A549 (cell line): ENCODE measurements at regions of chr6 and their contacts with region 1.

Region 1: DNA sequence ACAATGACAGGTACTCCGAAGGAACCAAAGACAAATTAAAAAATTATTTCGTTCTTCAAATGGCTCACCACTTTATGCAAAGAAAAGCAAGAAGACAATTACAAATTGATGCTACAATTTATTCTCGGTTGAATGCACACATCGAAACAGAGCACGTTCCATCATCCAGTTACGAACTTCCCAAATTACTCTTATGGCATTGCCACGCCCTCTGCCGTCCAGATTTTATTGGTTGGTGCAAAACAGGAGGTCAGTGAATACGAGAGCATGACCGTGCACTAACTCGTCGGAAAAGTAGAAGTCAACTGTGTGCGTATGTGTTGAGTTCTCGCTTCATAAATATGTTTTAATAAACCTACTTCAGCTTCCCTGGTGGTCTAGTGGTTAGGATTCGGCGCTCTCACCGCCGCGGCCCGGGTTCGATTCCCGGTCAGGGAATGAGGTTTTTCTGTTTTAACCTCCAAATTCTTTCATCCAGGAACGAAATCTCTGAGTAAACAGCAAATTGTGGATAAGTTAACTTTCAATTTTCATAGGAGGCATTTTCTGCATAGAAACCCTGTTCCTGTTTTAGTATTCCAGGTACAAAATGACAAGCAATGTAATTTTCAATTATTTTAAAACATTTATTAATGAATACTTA is 23.2 kb downstream of the ZNF311 start:
- DNase-seq: peak; percentile 27 to 91
- ATAC-seq: peak; percentile 17 to 52; a peak in 3 of 6 replicates
- H3K4me3 ChIP-seq: peak overlapping the region; percentile 80
- H3K27ac ChIP-seq: peak overlapping the region; percentile 72 to 83
- H3K4me1 ChIP-seq: peaks cover 10% of the 10 kb centered on the region
- CTCF ChIP-seq: no peak
- EP300 ChIP-seq: no peak
- POLR2A ChIP-seq: no peak
- RAD21 ChIP-seq: no peak

Region 2: GRCh38 chr6:28769626-28770402 is 212.1 kb before region 1 on chr6:
- CTCF ChIA-PET with region 1: no interaction called
- POLR2A ChIA-PET with region 1: no interaction called
- DNase-seq: peak; percentile 35 to 61
- ATAC-seq: peak; percentile 77 to 82
- H3K4me3 ChIP-seq: no peak overlapping the region
- H3K27ac ChIP-seq: no peak overlapping the region
- H3K4me1 ChIP-seq: no peaks in the 10 kb centered on the region
- CTCF ChIP-seq: 0 out of 3 replicates have a peak, but pooled peaks have one; percentile 15
- EP300 ChIP-seq: no peak
- POLR2A ChIP-seq: no peak
- RAD21 ChIP-seq: peak; percentile 17 to 29; a peak in 1 of 5 replicates

Region 3: GRCh38 chr6:28880894-28881780 is 100.8 kb before region 1 on chr6:
- CTCF ChIA-PET with region 1: no interaction called
- POLR2A ChIA-PET with region 1: interaction called, 14 read pairs
- DNase-seq: peak in 1 of 2 experiments; percentile 74
- ATAC-seq: peak; percentile 70 to 81
- H3K4me3 ChIP-seq: peak overlapping the region; percentile 57
- H3K27ac ChIP-seq: peak overlapping the region; percentile 70 to 84
- H3K4me1 ChIP-seq: peaks cover 6% of the 10 kb centered on the region; the same call in 2 of the 3 replicates
- CTCF ChIP-seq: no peak
- EP300 ChIP-seq: no peak
- POLR2A ChIP-seq: no peak
- RAD21 ChIP-seq: no peak

Region 4: GRCh38 chr6:28940858-28941680 is 40.9 kb before region 1 on chr6:
- CTCF ChIA-PET with region 1: interaction called, 3 read pairs
- POLR2A ChIA-PET with region 1: interaction called, 10 read pairs
- DNase-seq: peak in 1 of 2 experiments; percentile 89
- ATAC-seq: peak; percentile 83 to 85
- H3K4me3 ChIP-seq: peak overlapping the region; percentile 55
- H3K27ac ChIP-seq: peak overlapping the region; percentile 81 to 83
- H3K4me1 ChIP-seq: peaks cover 9% of the 10 kb centered on the region; the same call in 1 of the 3 replicates
- CTCF ChIP-seq: no peak
- EP300 ChIP-seq: no peak
- POLR2A ChIP-seq: no peak
- RAD21 ChIP-seq: no peak

Region 5: DNA sequence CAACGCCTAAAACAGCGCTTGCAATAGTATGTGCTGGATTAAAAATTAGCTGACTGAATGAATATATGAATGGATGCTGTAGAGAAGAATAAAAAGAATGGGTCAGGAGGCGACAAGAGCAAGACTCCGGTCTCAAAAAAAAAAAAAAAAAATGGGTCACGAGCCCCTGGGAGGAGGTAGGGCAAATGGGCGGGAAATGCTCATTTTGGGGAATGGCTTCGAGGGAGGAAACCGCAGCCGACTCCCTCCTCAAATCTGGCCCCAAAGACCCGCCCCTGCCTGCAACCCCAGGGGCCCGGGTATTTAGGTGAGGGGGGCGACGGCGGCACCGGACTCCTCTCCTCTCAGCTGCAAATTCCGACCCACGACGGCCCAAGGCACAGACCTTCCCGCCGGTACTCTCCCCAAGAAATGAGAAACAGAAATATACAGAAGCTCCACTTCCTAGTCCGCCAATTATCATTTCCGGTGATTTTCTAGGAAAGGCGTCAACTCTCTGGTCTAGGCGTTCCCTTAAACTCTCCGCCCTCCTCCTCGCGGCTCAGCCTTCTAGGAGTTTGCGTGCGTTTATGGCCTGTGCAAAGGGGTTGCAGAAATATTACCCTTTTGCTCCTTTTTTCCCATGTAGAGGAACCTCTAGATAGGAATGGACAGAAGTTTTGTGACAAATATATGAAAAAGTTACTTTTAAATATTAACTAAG is 23.4 kb after region 1 on chr6 and contains the start of gene ZNF311:
- CTCF ChIA-PET with region 1: interaction called, 4 read pairs
- POLR2A ChIA-PET with region 1: interaction called, 16 read pairs
- DNase-seq: peak; percentile 21 to 63
- ATAC-seq: peak; percentile 74 to 86; a peak in 5 of 6 replicates
- H3K4me3 ChIP-seq: peak within 1 kb of the TSS; percentile 41
- H3K27ac ChIP-seq: peak within 1 kb of the TSS; percentile 42 to 70; a peak in 3 of 6 replicates
- H3K4me1 ChIP-seq: peaks cover 8% of the 10 kb centered on the region; the same call in 2 of the 3 replicates
- CTCF ChIP-seq: no peak
- EP300 ChIP-seq: no peak
- POLR2A ChIP-seq: no peak
- RAD21 ChIP-seq: no peak
- polyA plus RNA-seq, gene ZNF311: 0.74 and 0.94 TPM in 2 replicates

Region 6: DNA sequence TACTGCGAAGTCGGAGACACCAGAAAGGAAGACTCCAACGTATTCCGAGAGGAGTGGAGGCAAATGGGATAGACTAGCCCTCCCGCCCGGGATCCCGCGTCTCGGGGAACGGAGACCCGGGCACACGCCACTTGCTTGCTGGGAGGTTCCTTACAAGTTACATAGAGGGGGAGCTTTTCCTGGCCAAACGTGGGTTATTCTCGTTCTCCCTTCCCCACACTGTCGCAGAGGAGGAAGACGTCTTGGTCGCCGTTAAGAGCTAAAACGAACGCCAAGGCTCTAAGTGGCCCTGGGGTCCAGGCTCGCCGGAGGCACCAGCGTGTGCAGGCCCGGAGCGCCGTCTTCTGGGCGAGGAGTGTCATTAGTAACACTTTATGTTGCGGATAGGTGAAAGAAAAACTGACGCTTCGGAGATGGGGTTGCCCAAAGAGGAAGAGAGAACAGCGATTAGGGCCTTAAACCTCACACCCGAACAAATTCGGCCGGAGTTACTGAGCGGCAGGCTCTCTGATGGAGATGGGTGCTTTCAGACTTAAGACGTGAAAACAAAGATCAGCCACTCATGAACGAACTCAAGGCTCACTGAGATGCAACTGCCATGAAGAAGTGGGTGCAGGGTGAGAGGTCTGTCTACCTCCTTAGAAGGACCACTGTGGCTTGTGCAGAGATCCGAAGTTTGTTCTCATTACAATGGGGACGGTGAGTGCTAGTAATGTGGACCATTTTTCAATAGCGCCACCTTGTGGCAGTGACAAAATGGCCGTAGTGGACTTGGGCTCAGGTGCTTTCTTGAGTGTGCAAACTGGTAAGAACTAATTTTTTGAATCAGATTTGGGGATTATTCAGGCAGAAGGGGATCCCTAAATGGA is 34.8 kb after region 1 on chr6:
- CTCF ChIA-PET with region 1: interaction called, 19 read pairs
- POLR2A ChIA-PET with region 1: interaction called, 13 read pairs
- DNase-seq: peak; percentile 46 to 83
- ATAC-seq: peak; percentile 93 to 94
- H3K4me3 ChIP-seq: peak overlapping the region; percentile 85
- H3K27ac ChIP-seq: peak overlapping the region; percentile 63 to 83
- H3K4me1 ChIP-seq: no peaks in the 10 kb centered on the region
- CTCF ChIP-seq: peak; percentile 67; the same call in 2 of the 3 replicates
- EP300 ChIP-seq: no peak
- POLR2A ChIP-seq: no peak
- RAD21 ChIP-seq: peak; percentile 67 to 74

Region 7: DNA sequence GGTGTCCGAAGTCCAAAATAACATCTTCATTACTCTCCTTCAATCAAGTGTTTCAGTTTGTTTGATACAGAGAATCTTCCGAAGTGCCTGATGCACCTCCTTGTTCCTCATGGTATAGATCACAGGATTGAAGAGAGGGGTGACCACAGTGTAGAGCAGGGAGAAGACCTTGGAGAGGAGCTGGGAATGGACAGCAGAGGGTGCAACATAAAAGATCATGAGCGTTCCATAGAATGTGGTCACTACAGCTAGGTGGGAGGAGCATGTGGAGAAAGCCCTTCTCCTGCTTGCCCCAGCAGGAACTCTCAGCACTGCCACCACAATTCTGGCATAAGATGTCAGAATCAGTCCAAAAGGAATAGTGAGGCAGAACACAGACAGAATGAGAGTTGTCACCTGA is 444.7 kb after region 1 on chr6:
- CTCF ChIA-PET with region 1: no interaction called
- POLR2A ChIA-PET with region 1: no interaction called
- DNase-seq: peak in 1 of 2 experiments; percentile 3
- ATAC-seq: no peak
- H3K4me3 ChIP-seq: no peak overlapping the region
- H3K27ac ChIP-seq: no peak overlapping the region
- H3K4me1 ChIP-seq: no peaks in the 10 kb centered on the region
- CTCF ChIP-seq: no peak
- EP300 ChIP-seq: no peak
- POLR2A ChIP-seq: no peak
- RAD21 ChIP-seq: no peak